ENCODE measurements at regions of chr2 and their contacts with region 1.

Region 1: GRCh38 chr2:13000664-13001363 is 284.1 kb downstream of the TRIB2 start:
- DNase-seq: no peak
- H3K4me3 ChIP-seq: no peak overlapping the region
- H3K27ac ChIP-seq: no peak overlapping the region
- H3K4me1 ChIP-seq: peaks cover 16 to 31% of the 10 kb centered on the region in 2 experiments
- H3K27me3 ChIP-seq: no peaks in the 10 kb centered on the region
- CTCF ChIP-seq: no peak
- EP300 ChIP-seq: no peak
- RAD21 ChIP-seq: no peak

Region 2: GRCh38 chr2:12965540-12966269 is 35.1 kb before region 1 on chr2:
- CTCF ChIA-PET with region 1: no interaction called
- POLR2A ChIA-PET with region 1: no interaction called
- DNase-seq: peak; percentile 55
- H3K4me3 ChIP-seq: no peak overlapping the region
- H3K27ac ChIP-seq: peak overlapping the region; percentile 33 to 98; a peak in 3 of 4 replicates
- H3K4me1 ChIP-seq: peaks cover 7 to 31% of the 10 kb centered on the region in 2 experiments
- H3K27me3 ChIP-seq: no peaks in the 10 kb centered on the region
- CTCF ChIP-seq: no peak
- EP300 ChIP-seq: peak; percentile 84 to 85
- RAD21 ChIP-seq: no peak

Region 3: GRCh38 chr2:12990523-12990922 is 10.3 kb before region 1 on chr2:
- CTCF ChIA-PET with region 1: interaction called, 38 read pairs
- POLR2A ChIA-PET with region 1: no interaction called
- DNase-seq: no peak
- H3K4me3 ChIP-seq: no peak overlapping the region
- H3K27ac ChIP-seq: no peak overlapping the region
- H3K4me1 ChIP-seq: no peaks in the 10 kb centered on the region; a peak in 1 of 4 replicates
- H3K27me3 ChIP-seq: no peaks in the 10 kb centered on the region
- CTCF ChIP-seq: peak; percentile 63
- EP300 ChIP-seq: no peak
- RAD21 ChIP-seq: peak; percentile 43; the same call in 1 of the 2 replicates

Region 4: DNA sequence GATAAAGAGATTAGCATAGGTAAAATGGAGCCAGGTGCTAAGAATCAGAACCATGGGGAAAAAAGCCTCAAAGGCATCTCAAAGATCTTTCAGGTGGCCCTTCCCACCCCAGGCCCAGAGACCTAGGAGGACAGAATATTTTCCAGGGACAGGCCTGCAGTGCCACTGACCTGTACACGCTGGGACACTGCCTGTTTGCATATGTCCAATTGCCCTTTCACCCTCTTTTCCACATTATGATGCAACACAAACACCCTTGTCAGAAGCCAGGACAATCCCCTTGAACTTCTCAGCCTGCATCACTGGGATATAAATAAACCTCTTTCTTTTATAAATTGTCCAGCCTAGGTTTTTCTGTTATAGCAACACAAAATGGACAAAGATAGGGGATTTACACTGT is 135.0 kb after region 1 on chr2:
- CTCF ChIA-PET with region 1: no interaction called
- POLR2A ChIA-PET with region 1: no interaction called
- DNase-seq: no peak
- H3K4me3 ChIP-seq: no peak overlapping the region
- H3K27ac ChIP-seq: no peak overlapping the region
- H3K4me1 ChIP-seq: no peaks in the 10 kb centered on the region
- H3K27me3 ChIP-seq: no peaks in the 10 kb centered on the region
- CTCF ChIP-seq: no peak
- EP300 ChIP-seq: no peak
- RAD21 ChIP-seq: no peak

Measured in SK-N-SH (cell line).